ENCODE measurements at regions of chr17 and their contacts with region 1.

Region 1: GRCh38 chr17:29617125-29617480 is 5.6 kb downstream of the CORO6 start:
- DNase-seq: peak; percentile 86
- H3K4me3 ChIP-seq: peak overlapping the region in 1 of 3 experiments; percentile 2
- H3K27ac ChIP-seq: no peak overlapping the region
- H3K4me1 ChIP-seq: peaks cover 33% of the 10 kb centered on the region
- H3K27me3 ChIP-seq: no peaks in the 10 kb centered on the region
- CTCF ChIP-seq: peak; percentile 91 to 94
- POLR2A ChIP-seq: no peak

Region 2: GRCh38 chr17:29483503-29483902 is 133.6 kb before region 1 on chr17:
- CTCF ChIA-PET with region 1: no interaction called
- POLR2A ChIA-PET with region 1: no interaction called
- dilution Hi-C with region 1: no loop called
- intact Hi-C with region 1: no loop called
- DNase-seq: no peak
- H3K4me3 ChIP-seq: no peak overlapping the region
- H3K27ac ChIP-seq: no peak overlapping the region
- H3K4me1 ChIP-seq: no peaks in the 10 kb centered on the region
- H3K27me3 ChIP-seq: no peaks in the 10 kb centered on the region
- CTCF ChIP-seq: no peak
- POLR2A ChIP-seq: no peak

Region 3: DNA sequence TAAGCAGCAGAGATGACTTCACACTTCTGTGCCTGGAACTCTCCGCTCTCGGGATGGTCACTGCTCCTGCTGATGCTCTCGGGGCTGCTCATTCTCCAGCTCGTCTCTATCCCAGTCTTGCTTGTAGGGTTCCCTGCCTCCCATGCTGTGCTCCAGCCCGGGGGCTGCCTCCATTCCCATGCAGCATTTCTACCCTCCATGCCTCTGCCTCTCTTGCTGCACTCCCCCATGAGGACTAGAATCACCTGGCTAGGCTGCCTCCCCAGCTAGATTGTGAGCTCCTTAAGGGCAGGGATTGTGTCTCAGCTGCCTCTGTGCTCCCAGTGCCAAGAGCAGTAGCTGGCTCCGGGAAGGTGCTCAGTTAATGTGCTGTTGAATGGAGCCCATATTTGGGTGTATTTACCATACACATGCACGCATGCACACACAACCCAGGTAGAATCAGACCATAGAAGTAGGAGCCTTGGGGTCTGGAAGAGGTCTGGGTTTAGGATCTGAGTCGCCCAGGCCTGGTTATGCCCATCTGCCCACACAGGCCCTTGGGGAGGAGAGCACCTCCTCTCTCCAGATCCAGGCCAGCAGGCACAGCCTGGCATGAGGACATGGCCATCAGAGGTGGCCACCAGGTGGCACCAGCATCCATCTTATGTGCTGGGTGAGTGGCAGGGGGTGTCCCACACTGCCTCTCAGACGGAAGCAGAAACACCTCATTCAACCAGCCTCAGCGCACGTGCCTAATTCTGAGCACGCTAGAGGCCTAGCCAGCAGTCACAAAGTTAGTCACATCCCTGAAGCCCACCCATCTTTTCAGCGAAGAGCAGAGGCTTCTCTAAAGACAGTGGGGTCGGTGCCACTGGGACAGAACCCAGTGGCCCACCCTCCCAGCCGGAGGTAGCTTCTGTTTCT is 37.0 kb before region 1 on chr17:
- CTCF ChIA-PET with region 1: interaction called, 113 read pairs
- POLR2A ChIA-PET with region 1: interaction called, 3 read pairs
- dilution Hi-C with region 1: no loop called
- intact Hi-C with region 1: loop called (anchors 1 kb)
- DNase-seq: peak; percentile 81
- H3K4me3 ChIP-seq: no peak overlapping the region
- H3K27ac ChIP-seq: no peak overlapping the region
- H3K4me1 ChIP-seq: peaks cover 14% of the 10 kb centered on the region
- H3K27me3 ChIP-seq: no peaks in the 10 kb centered on the region
- CTCF ChIP-seq: peak; percentile 86 to 92
- POLR2A ChIP-seq: peak; percentile 47

Region 4: GRCh38 chr17:29630630-29631193 is 13.6 kb after region 1 on chr17:
- CTCF ChIA-PET with region 1: interaction called, 37 read pairs
- POLR2A ChIA-PET with region 1: no interaction called
- dilution Hi-C with region 1: no loop called
- intact Hi-C with region 1: no loop called
- DNase-seq: no peak
- H3K4me3 ChIP-seq: no peak overlapping the region
- H3K27ac ChIP-seq: no peak overlapping the region
- H3K4me1 ChIP-seq: no peaks in the 10 kb centered on the region
- H3K27me3 ChIP-seq: no peaks in the 10 kb centered on the region
- CTCF ChIP-seq: no peak
- POLR2A ChIP-seq: no peak

Region 5: DNA sequence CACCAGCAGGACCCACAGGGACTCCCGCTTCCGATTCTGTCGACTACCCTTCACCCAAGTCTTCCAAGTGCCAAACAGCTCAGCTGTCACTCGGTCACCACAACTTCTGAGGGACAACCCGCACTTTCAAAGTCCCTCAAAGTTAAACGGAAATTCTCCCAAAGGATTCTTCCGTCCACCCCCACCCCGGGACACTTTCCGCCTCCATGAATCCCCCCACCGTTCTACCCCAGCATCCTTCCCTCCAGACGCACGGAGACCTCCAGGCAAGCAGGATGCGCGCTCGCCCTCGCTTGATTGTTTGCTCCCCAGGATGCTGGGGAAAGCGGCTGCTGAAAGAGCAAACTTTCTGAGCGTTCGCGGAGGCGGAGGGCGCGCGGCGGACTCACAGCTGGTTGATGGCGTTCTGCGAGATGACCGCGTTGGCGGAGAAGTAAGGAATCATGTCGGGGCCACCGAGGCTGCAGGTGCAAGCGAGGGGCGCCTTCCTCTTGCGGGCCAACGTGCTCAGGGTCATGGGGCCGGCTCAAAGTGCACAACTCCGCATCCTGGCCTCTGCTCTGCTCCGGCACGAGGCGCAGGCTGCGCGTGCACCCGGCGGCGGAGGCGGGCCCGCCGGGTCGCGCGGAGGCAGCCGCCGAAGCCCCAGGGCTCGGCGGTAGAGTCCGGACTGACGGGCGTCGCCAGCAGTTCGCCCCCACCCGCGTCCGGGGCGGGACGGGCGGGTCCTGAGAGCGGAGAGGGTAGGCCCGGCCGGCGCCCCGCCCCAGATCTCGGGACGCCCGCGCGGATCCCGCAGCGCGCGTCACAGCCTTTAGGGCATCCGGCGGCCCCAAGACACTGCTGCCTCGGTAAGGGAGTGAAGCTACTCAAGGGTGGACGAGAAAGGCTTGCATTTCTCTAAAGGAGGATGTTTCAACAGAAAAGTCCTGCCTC is 143.9 kb after region 1 on chr17:
- CTCF ChIA-PET with region 1: interaction called, 17 read pairs
- POLR2A ChIA-PET with region 1: no interaction called
- dilution Hi-C with region 1: no loop called
- intact Hi-C with region 1: loop called (anchors 5 kb)
- DNase-seq: peak; percentile 89
- H3K4me3 ChIP-seq: peak overlapping the region; percentile 56 to 93 (median 89)
- H3K27ac ChIP-seq: peak overlapping the region; percentile 84
- H3K4me1 ChIP-seq: peaks cover 11% of the 10 kb centered on the region
- H3K27me3 ChIP-seq: no peaks in the 10 kb centered on the region
- CTCF ChIP-seq: no peak
- POLR2A ChIP-seq: peak; percentile 90

Region 6: GRCh38 chr17:29931231-29931932 is 314.3 kb after region 1 on chr17:
- CTCF ChIA-PET with region 1: interaction called, 63 read pairs
- POLR2A ChIA-PET with region 1: no interaction called
- dilution Hi-C with region 1: no loop called
- intact Hi-C with region 1: loop called (anchors 1 kb)
- DNase-seq: peak; percentile 86
- H3K4me3 ChIP-seq: peak overlapping the region in 1 of 3 experiments; percentile 66
- H3K27ac ChIP-seq: no peak overlapping the region
- H3K4me1 ChIP-seq: peaks cover 34% of the 10 kb centered on the region
- H3K27me3 ChIP-seq: no peaks in the 10 kb centered on the region
- CTCF ChIP-seq: peak; percentile 81 to 87
- POLR2A ChIP-seq: no peak

Measured in endothelial cell of umbilical vein (primary cell).